ENCODE measurements at regions of chr2 and their contacts with region 1.

Region 1: GRCh38 chr2:39227628-39228412 is 15.9 kb downstream of the CDKL4 start:
- DNase-seq: peak; percentile 77
- H3K4me3 Mint-ChIP-seq: peak overlapping the region; percentile 72
- H3K27ac Mint-ChIP-seq: peak overlapping the region; percentile 67
- H3K4me1 Mint-ChIP-seq: peaks cover 42% of the 10 kb centered on the region
- H3K27me3 Mint-ChIP-seq: no peaks in the 10 kb centered on the region

Region 2: DNA sequence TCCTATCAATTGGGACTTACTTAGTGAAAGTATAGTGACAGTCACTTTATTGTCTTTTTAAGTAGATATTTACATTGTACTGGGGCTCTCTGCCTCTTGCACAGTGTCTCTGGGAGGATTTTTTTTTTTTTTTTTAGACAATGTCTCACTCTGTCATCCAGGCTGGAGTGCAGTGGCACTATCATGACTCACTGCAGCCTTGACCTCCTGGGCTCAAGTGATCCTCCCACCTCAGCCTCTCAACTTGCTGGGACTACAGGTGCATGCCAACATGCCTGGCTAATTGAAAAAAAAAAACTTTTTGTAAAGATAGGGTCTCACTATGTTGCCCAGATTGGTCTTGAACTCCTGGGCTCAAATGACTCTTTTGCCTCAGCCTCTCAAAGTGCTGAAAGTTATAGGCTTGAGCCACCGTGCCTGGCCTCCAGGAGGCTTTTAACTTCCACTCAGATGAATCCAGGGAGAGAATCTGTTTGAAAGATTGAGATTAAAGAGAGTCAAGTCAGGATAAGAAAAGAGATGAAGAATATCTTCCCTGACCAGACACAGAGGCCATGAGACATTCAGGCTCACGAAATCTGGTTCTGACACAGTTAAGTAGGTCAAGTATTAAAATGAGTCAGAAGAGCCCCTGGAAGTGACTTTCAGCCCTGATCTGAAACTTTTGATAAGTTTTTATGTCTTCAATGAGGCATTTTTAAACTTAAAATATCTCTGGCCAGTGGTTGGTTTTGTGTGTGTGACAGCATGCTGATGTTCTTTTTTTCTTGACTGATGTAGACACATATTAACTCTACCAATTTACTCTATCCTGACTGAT is 319.9 kb before region 1 on chr2:
- intact Hi-C with region 1: loop called (anchors 5 kb)
- DNase-seq: no peak
- H3K4me3 Mint-ChIP-seq: no peak overlapping the region
- H3K27ac Mint-ChIP-seq: peak overlapping the region; percentile 47
- H3K4me1 Mint-ChIP-seq: peaks cover 15% of the 10 kb centered on the region
- H3K27me3 Mint-ChIP-seq: peaks cover 6% of the 10 kb centered on the region

Region 3: GRCh38 chr2:38947240-38948239 is 280.3 kb before region 1 on chr2:
- intact Hi-C with region 1: loop called (anchors 1 kb)
- DNase-seq: peak; percentile 60
- H3K4me3 Mint-ChIP-seq: no peak overlapping the region
- H3K27ac Mint-ChIP-seq: no peak overlapping the region
- H3K4me1 Mint-ChIP-seq: peaks cover 2% of the 10 kb centered on the region
- H3K27me3 Mint-ChIP-seq: peaks cover 4% of the 10 kb centered on the region

Region 4: DNA sequence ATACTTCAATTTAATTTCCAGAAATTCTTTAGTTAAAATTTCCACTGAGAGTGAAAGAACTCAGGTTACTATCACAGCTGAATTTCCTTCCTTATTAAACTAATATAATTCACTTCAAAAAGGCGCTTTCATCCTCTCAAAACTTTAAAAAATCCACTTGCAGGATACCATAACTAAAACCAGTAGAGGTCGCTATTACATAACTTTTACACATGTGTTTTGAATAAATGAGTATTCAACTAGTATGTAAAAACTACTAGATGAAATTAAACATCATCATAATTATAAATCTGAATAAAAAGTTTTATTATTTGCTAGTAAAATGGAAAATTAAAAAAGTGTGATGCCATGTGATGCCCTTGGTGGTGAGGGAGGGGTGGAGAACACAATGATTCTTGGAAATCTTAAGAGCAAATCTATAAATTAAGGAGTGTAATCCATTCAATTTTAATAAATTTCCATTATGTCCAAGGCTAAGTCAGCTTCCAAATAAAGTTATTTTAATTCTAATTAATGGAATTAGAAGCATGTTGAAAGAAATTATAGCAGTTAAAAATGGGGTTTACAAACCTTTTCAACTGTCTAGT is 168.4 kb before region 1 on chr2:
- intact Hi-C with region 1: loop called (anchors 1 kb)
- DNase-seq: no peak
- H3K4me3 Mint-ChIP-seq: no peak overlapping the region
- H3K27ac Mint-ChIP-seq: peak overlapping the region; percentile 58
- H3K4me1 Mint-ChIP-seq: peaks cover 20% of the 10 kb centered on the region
- H3K27me3 Mint-ChIP-seq: no peaks in the 10 kb centered on the region

Region 5: DNA sequence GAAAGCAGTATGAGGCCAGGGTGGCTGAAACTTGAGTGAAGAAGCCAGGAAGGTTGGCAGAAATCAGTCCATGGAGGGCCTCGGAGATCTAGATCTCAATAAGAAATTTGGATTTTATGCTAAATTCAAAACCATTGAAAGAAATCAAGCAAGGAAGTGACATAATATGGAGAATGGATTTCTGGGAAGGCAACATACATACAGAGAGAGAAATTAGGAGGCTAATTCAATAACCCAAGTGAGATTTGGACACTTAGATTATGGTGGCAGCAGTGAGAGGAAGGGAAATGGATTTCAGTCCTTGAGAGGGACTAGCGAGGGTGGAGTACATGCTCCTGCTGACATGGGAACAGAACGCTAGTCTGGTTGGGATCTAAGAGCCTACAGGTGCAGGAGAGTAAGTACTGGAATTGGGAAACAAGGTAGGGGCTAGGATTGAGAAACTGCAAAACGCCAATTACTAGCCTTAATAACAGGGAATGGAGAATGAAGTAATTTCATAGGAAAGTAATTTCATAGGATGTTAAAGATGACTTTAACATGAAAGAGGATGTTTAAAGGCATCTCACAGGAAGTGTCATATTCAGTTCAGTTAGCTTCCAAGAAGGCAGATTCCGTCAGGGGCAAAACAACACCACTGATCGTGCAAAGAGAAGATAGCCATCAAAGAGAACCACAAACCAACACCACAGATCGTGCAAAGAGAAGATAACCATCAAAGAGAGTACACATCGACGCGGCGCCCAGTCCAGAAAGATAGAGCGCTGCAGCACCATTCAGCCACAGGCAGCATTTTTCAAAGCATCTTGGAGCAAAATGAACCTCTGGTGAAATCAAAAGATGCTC is 11.3 kb before region 1 on chr2:
- intact Hi-C with region 1: loop called (anchors 1 kb)
- DNase-seq: peak; percentile 87
- H3K4me3 Mint-ChIP-seq: peak overlapping the region; percentile 38
- H3K27ac Mint-ChIP-seq: peak overlapping the region; percentile 88
- H3K4me1 Mint-ChIP-seq: peaks cover 64% of the 10 kb centered on the region
- H3K27me3 Mint-ChIP-seq: no peaks in the 10 kb centered on the region